ENCODE measurements at regions of chr11 and their contacts with region 1.

Region 1: GRCh38 chr11:14249121-14249963 is 109.6 kb downstream of the RRAS2 start:
- DNase-seq: peak; percentile 46
- H3K4me3 ChIP-seq: no peak overlapping the region
- H3K27ac ChIP-seq: no peak overlapping the region
- H3K4me1 ChIP-seq: no peaks in the 10 kb centered on the region
- H3K27me3 ChIP-seq: peaks cover 27% of the 10 kb centered on the region in 2 experiments
- CTCF ChIP-seq: peak; percentile 69 to 77
- POLR2A ChIP-seq: no peak

Region 2: GRCh38 chr11:13486926-13487660 is 762.2 kb before region 1 on chr11:
- CTCF ChIA-PET with region 1: interaction called, 5 read pairs
- POLR2A ChIA-PET with region 1: no interaction called
- dilution Hi-C with region 1: no loop called
- intact Hi-C with region 1: loop called (anchors 1 kb)
- DNase-seq: peak; percentile 40
- H3K4me3 ChIP-seq: peak overlapping the region in 1 of 3 experiments; percentile 12
- H3K27ac ChIP-seq: no peak overlapping the region
- H3K4me1 ChIP-seq: no peaks in the 10 kb centered on the region
- H3K27me3 ChIP-seq: peaks cover 6 to 13% of the 10 kb centered on the region in 2 experiments
- CTCF ChIP-seq: peak; percentile 32 to 69
- POLR2A ChIP-seq: no peak

Region 3: DNA sequence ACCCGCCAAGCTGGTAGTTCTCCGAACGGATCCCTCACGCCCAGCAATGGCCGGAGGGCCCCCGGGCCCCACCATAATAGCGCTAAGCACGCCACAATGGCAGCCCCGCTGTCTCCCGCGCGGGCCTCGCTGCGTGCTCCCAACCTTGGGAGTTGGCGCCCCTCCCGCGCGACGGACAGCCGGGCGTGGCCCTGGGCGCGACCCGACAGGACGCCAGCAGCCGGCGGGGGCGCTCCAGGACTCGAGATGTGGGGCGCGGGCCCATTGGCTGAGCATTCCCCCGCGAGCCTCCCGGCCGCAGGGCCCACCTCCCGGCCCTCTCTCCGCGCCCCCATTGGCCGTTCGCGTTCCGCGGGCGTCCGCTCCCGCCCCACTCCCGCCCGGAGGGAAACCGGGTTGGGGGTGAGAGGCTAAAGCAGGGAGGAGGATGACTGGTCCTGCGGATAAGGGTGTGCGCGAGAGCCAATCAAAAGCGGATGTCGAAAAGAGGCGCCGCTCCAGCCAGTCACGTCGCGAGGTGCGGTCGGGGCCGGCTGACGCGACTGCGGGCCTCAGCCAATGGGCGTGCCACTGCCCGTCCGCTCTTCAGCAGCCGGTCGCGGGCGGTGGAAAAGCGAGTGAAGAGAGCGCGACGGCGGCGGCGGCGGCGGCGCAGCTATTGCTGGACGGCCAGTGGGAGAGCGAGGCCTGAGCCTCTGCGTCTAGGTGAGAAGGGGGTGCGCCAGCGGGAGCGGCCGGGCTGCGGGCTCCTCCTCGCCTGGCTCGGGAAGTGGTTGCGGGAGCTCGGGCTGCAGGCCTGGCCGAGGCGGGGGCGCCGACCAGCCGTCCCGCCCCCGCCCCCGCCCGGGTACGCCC is 581.0 kb before region 1 on chr11 and contains the start of gene FAR1:
- CTCF ChIA-PET with region 1: no interaction called
- POLR2A ChIA-PET with region 1: no interaction called
- dilution Hi-C with region 1: no loop called
- intact Hi-C with region 1: loop called (anchors 1 kb)
- DNase-seq: peak; percentile 100
- H3K4me3 ChIP-seq: peak within 1 kb of the TSS; percentile 84 to 95 (median 90)
- H3K27ac ChIP-seq: peak within 1 kb of the TSS; percentile 81
- H3K4me1 ChIP-seq: peaks cover 20% of the 10 kb centered on the region
- H3K27me3 ChIP-seq: no peaks in the 10 kb centered on the region
- CTCF ChIP-seq: peak; percentile 59 to 71
- POLR2A ChIP-seq: peak; percentile 75
- total RNA-seq, gene FAR1: 72.3 and 76.4 TPM in 2 replicates

Region 4: DNA sequence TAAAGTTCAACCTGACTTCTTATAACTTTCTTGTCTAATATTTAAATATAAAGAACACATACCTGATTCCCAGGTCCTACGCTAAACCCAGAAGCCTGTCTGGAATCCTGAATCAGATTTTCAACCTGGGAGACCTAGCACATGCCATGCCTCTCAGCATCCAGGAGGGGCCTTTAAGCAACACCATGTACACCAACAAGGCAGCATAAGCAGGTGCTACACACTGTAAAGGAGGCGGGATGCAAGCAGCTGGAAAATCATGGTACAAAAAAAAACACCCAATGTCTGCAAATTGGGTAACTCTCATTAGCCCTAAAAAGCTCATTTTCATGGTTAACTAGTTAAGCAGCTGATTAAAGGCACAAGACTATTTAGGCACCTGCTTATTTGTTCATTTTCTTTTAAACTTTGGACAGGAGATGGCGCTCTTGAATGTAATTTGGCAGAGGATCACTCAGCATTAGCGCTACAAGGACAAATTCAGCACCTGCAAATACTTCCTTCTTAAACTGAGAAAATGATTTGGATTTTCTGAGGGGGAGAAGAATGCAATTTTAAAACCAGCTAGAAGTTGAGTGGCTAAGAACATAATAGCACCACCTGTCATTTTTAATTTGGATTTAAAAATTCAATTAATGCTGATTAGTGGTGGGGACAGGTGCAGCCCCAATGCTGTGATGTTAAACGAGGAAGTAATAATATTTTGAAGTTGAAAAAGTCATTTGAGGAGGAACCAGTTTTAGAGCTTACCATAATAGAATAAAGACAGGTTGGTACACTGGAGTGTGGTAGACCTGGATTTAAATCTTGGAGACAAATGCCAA is 476.9 kb before region 1 on chr11:
- CTCF ChIA-PET with region 1: interaction called, 35 read pairs
- POLR2A ChIA-PET with region 1: no interaction called
- dilution Hi-C with region 1: no loop called
- intact Hi-C with region 1: loop called (anchors 1 kb)
- DNase-seq: peak; percentile 72
- H3K4me3 ChIP-seq: no peak overlapping the region
- H3K27ac ChIP-seq: no peak overlapping the region
- H3K4me1 ChIP-seq: no peaks in the 10 kb centered on the region
- H3K27me3 ChIP-seq: peaks cover 18 to 21% of the 10 kb centered on the region in 2 experiments
- CTCF ChIP-seq: peak; percentile 25 to 27
- POLR2A ChIP-seq: no peak

Region 5: GRCh38 chr11:13868710-13869397 is 380.5 kb before region 1 on chr11:
- CTCF ChIA-PET with region 1: no interaction called
- POLR2A ChIA-PET with region 1: no interaction called
- dilution Hi-C with region 1: no loop called
- intact Hi-C with region 1: loop called (anchors 1 kb)
- DNase-seq: no peak
- H3K4me3 ChIP-seq: no peak overlapping the region
- H3K27ac ChIP-seq: no peak overlapping the region
- H3K4me1 ChIP-seq: peaks cover 4% of the 10 kb centered on the region
- H3K27me3 ChIP-seq: peaks cover 2 to 3% of the 10 kb centered on the region in 2 experiments
- CTCF ChIP-seq: no peak
- POLR2A ChIP-seq: no peak

Region 6: GRCh38 chr11:13955971-13956421 is 293.3 kb before region 1 on chr11:
- CTCF ChIA-PET with region 1: interaction called, 22 read pairs
- POLR2A ChIA-PET with region 1: no interaction called
- dilution Hi-C with region 1: no loop called
- intact Hi-C with region 1: loop called (anchors 1 kb)
- DNase-seq: peak; percentile 56
- H3K4me3 ChIP-seq: no peak overlapping the region
- H3K27ac ChIP-seq: no peak overlapping the region
- H3K4me1 ChIP-seq: no peaks in the 10 kb centered on the region
- H3K27me3 ChIP-seq: peaks cover 41 to 85% of the 10 kb centered on the region in 2 experiments
- CTCF ChIP-seq: peak; percentile 74 to 85
- POLR2A ChIP-seq: no peak